ENCODE measurements at regions of chr2 and their contacts with region 1.

Region 1: DNA sequence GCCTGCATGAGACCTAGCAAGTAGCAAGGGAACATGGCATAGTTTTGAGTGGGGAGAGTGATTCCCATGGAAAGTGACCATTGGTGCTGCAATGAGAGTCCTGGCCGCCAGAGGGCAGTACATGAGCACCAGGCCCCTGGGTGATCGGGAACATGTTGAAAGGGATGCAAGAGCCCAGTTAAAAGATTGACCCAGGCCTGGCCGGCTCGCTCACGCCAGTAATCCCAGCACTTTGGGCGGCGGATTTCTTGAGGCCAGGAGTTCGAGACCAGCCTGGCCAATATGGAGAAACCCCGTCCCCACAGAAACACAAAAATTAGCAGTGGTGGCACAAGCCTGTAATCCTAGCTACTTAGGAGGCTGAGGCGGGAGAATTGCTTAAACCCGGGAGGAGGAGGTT is 22.2 kb downstream of the FAP start:
- DNase-seq: peak; percentile 74
- H3K4me3 Mint-ChIP-seq: no peak overlapping the region
- H3K27ac Mint-ChIP-seq: no peak overlapping the region
- H3K4me1 Mint-ChIP-seq: no peaks in the 10 kb centered on the region
- H3K27me3 Mint-ChIP-seq: peaks cover 9% of the 10 kb centered on the region

Region 2: DNA sequence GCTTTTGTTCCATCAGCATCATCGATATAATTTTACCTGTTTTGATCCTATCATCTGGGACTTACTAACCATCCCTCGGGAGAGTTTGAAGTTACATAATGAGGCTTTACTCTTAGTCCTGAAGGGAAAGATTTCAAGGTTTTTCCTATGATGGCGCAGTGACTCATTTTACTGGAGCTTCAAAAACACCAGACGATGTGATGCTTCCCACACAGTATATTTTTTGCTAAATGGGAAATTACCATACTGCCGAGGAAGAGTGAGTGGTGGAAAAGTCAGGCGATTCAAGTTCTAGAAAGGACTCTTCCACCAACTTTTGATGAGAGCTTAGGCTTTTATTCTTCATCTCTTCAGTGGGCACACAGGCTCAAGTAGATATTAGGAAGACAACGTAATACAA is 24.4 kb before region 1 on chr2:
- CTCF ChIA-PET with region 1: interaction called, 10 read pairs
- intact Hi-C with region 1: no loop called
- DNase-seq: no peak
- H3K4me3 Mint-ChIP-seq: no peak overlapping the region
- H3K27ac Mint-ChIP-seq: no peak overlapping the region
- H3K4me1 Mint-ChIP-seq: peaks cover 8% of the 10 kb centered on the region
- H3K27me3 Mint-ChIP-seq: peaks cover 31% of the 10 kb centered on the region

Region 3: GRCh38 chr2:162291748-162292147 is 70.7 kb after region 1 on chr2:
- CTCF ChIA-PET with region 1: interaction called, 204 read pairs
- intact Hi-C with region 1: no loop called
- DNase-seq: no peak
- H3K4me3 Mint-ChIP-seq: no peak overlapping the region
- H3K27ac Mint-ChIP-seq: no peak overlapping the region
- H3K4me1 Mint-ChIP-seq: no peaks in the 10 kb centered on the region
- H3K27me3 Mint-ChIP-seq: no peaks in the 10 kb centered on the region

Region 4: GRCh38 chr2:162333968-162334367 is 112.9 kb after region 1 on chr2:
- CTCF ChIA-PET with region 1: interaction called, 14 read pairs
- intact Hi-C with region 1: loop called (anchors 1 kb)
- DNase-seq: peak; percentile 53
- H3K4me3 Mint-ChIP-seq: no peak overlapping the region
- H3K27ac Mint-ChIP-seq: no peak overlapping the region
- H3K4me1 Mint-ChIP-seq: no peaks in the 10 kb centered on the region
- H3K27me3 Mint-ChIP-seq: no peaks in the 10 kb centered on the region